ENCODE measurements at regions of chrX and their contacts with region 1.

Region 1: GRCh38 chrX:54182864-54183608 is at the start of gene FAM120C:
- DNase-seq: peak; percentile 78
- ATAC-seq: peak; percentile 76
- H3K4me3 ChIP-seq: peak within 1 kb of the TSS in 4 of 5 experiments; percentile 61 to 74 (median 66)
- H3K4me3 Mint-ChIP-seq: peak within 1 kb of the TSS; percentile 89
- H3K27ac ChIP-seq: peak within 1 kb of the TSS; percentile 48 to 63
- H3K27ac Mint-ChIP-seq: peak within 1 kb of the TSS; percentile 88
- H3K4me1 ChIP-seq: peaks cover 20 to 24% of the 10 kb centered on the region in 2 donors
- H3K4me1 Mint-ChIP-seq: peaks cover 42% of the 10 kb centered on the region
- H3K27me3 ChIP-seq: no peaks in the 10 kb centered on the region
- H3K27me3 Mint-ChIP-seq: no peaks in the 10 kb centered on the region
- CTCF ChIP-seq: no peak
- total RNA-seq, gene FAM120C: 22.2 and 23.3 TPM in 2 replicates

Region 2: GRCh38 chrX:53135581-53135980 is 1047.5 kb before region 1 on chrX:
- CTCF ChIA-PET with region 1: no interaction called
- POLR2A ChIA-PET with region 1: no interaction called
- intact Hi-C with region 1: no loop called
- DNase-seq: no peak
- ATAC-seq: no peak
- H3K4me3 ChIP-seq: no peak overlapping the region
- H3K4me3 Mint-ChIP-seq: no peak overlapping the region
- H3K27ac ChIP-seq: no peak overlapping the region
- H3K27ac Mint-ChIP-seq: no peak overlapping the region
- H3K4me1 ChIP-seq: no peaks in the 10 kb centered on the region
- H3K4me1 Mint-ChIP-seq: no peaks in the 10 kb centered on the region
- H3K27me3 ChIP-seq: no peaks in the 10 kb centered on the region
- H3K27me3 Mint-ChIP-seq: no peaks in the 10 kb centered on the region
- CTCF ChIP-seq: no peak

Region 3: DNA sequence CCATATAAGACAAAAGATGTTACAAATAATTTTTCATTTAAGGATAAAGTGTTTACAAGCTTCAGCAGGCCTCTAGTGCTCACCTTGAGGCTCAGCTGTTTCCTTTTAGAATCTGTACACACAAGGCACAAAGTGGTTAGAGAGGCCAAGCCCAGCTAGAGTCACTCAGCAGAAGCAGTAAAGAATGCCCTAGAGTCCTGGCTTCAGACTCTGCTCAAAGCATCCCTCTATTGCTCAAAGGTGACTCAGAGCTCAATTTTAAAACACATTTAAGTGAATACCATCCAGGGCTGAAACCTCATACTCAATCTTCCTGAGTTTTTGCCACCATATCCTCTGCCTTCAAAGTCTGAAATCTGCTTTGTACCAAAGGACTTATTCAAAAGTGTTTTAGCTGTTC is 116.2 kb before region 1 on chrX:
- CTCF ChIA-PET with region 1: no interaction called
- POLR2A ChIA-PET with region 1: no interaction called
- intact Hi-C with region 1: no loop called
- DNase-seq: no peak
- ATAC-seq: no peak
- H3K4me3 ChIP-seq: no peak overlapping the region
- H3K4me3 Mint-ChIP-seq: no peak overlapping the region
- H3K27ac ChIP-seq: no peak overlapping the region
- H3K27ac Mint-ChIP-seq: no peak overlapping the region
- H3K4me1 ChIP-seq: no peaks in the 10 kb centered on the region
- H3K4me1 Mint-ChIP-seq: no peaks in the 10 kb centered on the region
- H3K27me3 ChIP-seq: no peaks in the 10 kb centered on the region
- H3K27me3 Mint-ChIP-seq: no peaks in the 10 kb centered on the region
- CTCF ChIP-seq: no peak

Region 4: GRCh38 chrX:54999717-55000598 is 816.9 kb after region 1 on chrX and contains the start of gene APEX2:
- CTCF ChIA-PET with region 1: no interaction called
- POLR2A ChIA-PET with region 1: no interaction called
- intact Hi-C with region 1: loop called (anchors 2 kb)
- DNase-seq: peak; percentile 91
- ATAC-seq: peak; percentile 94
- H3K4me3 ChIP-seq: peak within 1 kb of the TSS; percentile 71 to 75 (median 73)
- H3K4me3 Mint-ChIP-seq: peak within 1 kb of the TSS; percentile 97
- H3K27ac ChIP-seq: peak within 1 kb of the TSS; percentile 85 to 86
- H3K27ac Mint-ChIP-seq: peak within 1 kb of the TSS; percentile 95
- H3K4me1 ChIP-seq: peaks cover 7 to 20% of the 10 kb centered on the region in 2 donors
- H3K4me1 Mint-ChIP-seq: peaks cover 27% of the 10 kb centered on the region
- H3K27me3 ChIP-seq: no peaks in the 10 kb centered on the region
- H3K27me3 Mint-ChIP-seq: no peaks in the 10 kb centered on the region
- CTCF ChIP-seq: no peak
- total RNA-seq, gene APEX2: 13.1 and 19.6 TPM in 2 replicates